Sigmoid colon (tissue), 7 donors: ENCODE measurements at regions of chr3 and their contacts with region 1.

Region 1: GRCh38 chr3:126654571-126655383 is at the start of gene TXNRD3:
- DNase-seq: peak; percentile 86
- H3K4me3 ChIP-seq: peak within 1 kb of the TSS; percentile 46 to 93 (median 74)
- H3K27ac ChIP-seq: peak within 1 kb of the TSS; percentile 76 to 88 (median 84)
- H3K4me1 ChIP-seq: peaks cover 0 to 15% (median 8%) of the 10 kb centered on the region in 4 donors
- H3K27me3 ChIP-seq: peaks cover 0 to 13% (median 0%) of the 10 kb centered on the region in 3 donors
- CTCF ChIP-seq: no peak
- EP300 ChIP-seq: no peak
- POLR2A ChIP-seq: no peak
- total RNA-seq, gene TXNRD3: 13.2 to 21.4 (median 13.8) TPM

Region 2: DNA sequence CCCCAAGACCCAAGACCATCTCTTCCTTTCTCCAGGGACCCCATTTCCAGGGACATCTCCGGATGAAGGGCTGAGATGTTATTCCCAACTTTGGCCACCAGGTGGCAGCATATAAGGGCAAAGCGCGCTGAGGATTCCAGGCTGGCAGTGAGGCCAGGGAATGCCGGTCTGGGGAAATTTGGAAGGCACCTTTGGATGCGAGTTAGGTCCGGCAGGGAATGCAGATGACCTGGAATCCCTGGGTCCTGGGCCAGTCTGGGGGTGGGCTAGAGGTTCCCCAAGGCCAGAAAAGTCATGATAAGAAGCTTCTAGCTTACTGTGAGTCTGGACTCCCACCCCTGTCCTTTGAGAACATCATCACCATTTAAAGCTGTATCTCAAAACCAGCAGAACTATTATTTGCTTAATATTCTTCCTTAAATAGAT is 132.4 kb before region 1 on chr3:
- intact Hi-C with region 1: loop called (anchors 10 kb)
- DNase-seq: peak; percentile 71
- H3K4me3 ChIP-seq: no peak overlapping the region
- H3K27ac ChIP-seq: no peak overlapping the region
- H3K4me1 ChIP-seq: peaks cover 0 to 15% (median 13%) of the 10 kb centered on the region in 4 donors
- H3K27me3 ChIP-seq: peaks cover 8 to 41% (median 15%) of the 10 kb centered on the region in 3 donors
- CTCF ChIP-seq: peak; percentile 32 to 92 (median 82)
- EP300 ChIP-seq: no peak
- POLR2A ChIP-seq: no peak